ENCODE measurements at regions of chr21 and their contacts with region 1.

Region 1: DNA sequence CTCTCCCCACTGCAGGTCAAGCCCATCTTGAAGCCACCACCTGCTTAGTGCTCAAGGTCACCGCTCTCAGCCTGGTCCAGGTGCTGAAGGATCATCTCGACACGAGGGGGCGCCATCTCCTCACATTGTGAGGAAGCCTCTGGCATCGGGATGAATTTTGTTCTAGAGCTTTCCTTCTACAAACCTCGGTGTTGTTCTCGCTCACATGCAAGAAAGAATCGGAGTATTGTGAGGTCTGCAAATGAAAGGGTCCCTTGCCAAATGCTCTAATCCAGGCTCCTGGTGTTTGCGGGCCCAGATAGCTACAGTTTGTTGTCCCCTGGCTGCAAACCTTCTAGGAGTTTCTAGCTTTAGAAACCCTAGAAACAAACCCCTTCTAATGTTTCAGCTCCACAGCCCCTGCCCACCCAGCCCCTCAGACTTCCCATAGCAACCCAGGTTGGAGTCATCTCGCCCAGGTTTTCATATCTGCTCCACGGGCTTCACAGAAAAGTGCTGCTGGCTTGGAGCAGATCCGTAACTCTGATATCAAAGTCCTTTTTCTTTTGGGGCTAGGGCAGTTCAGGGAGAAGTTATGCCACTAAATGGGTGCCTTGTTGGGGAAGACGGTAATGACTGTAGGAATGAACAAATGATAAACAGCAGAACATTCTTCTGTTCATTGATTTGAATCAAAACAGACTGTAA is 8.6 kb upstream of the ATP5PO start:
- DNase-seq: peak; percentile 83 to 92 (median 84)
- ATAC-seq: peak; percentile 100
- H3K4me3 ChIP-seq: no peak overlapping the region
- H3K27ac ChIP-seq: no peak overlapping the region
- H3K4me1 ChIP-seq: peaks cover 0 to 3% of the 10 kb centered on the region in 2 experiments; a peak in 1 of 5 replicates
- H3K27me3 ChIP-seq: peaks cover 0 to 6% of the 10 kb centered on the region in 2 experiments; a peak in 1 of 5 replicates
- CTCF ChIP-seq: peak; percentile 94 to 98 (median 94)
- EP300 ChIP-seq: peak; percentile 49; the same call in 1 of the 2 replicates
- POLR2A ChIP-seq: no peak
- RAD21 ChIP-seq: peak; percentile 99 to 100

Region 2: DNA sequence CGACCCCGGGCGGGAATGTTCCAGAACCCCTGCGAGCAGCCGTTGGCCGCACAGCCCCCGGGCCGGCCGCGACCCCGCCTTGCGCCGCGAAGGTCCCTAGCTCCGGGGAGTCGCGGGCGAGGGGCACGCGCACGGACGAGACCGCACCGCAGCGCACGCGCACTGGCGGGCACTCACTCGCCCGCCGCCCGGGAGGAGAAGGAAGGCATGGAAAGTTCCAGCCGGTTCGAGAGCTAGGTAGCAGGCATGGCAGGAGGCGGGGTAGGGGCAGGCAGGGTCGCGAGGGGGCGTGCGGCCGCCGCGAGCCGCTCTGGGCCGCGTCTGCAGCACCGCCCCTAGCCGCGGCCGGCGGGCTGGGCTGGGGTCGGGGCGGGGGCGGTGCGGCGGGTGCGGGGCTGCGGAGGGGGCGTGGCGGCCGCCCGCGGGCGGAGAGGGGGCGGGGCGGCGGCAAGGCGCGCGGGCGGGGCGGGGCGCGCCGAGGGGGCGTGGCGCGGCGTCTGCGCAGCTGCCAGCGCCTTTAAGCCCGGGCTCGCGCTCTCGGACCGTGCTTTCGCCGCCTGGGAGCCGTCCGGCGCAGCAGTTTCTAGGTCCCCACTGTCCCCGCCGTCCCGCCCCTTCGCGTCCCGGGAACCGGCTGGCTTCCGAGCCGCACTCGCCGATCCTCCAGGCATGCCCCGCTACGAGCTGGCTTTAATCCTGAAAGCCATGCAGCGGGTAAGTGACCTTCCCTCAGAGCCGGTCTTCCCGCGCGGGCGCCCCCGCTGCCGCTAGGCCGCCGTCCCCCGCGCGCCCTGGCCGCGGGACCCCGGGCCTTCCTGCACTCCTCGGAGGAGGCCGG is 149.0 kb after region 1 on chr21 and contains the starts of genes MRPS6 and SLC5A3:
- CTCF ChIA-PET with region 1: no interaction called
- POLR2A ChIA-PET with region 1: interaction called, 3 read pairs
- in situ Hi-C with region 1: loop called (anchors 10 kb)
- intact Hi-C with region 1: loop called (anchors 5 kb)
- DNase-seq: peak; percentile 91 to 96 (median 94)
- ATAC-seq: peak; percentile 82
- H3K4me3 ChIP-seq: peak within 1 kb of the TSS; percentile 65
- H3K27ac ChIP-seq: peak within 1 kb of the TSS; percentile 87
- H3K4me1 ChIP-seq: peaks cover 9 to 36% of the 10 kb centered on the region in 2 experiments; a peak in 4 of 5 replicates
- H3K27me3 ChIP-seq: peaks cover 0 to 5% of the 10 kb centered on the region in 2 experiments; a peak in 2 of 5 replicates
- CTCF ChIP-seq: peak in 2 of 3 experiments; percentile 41 to 50; a peak in 3 of 6 replicates
- EP300 ChIP-seq: peak; percentile 27
- POLR2A ChIP-seq: peak; percentile 87
- RAD21 ChIP-seq: peak; percentile 44 to 55
- polyA plus RNA-seq, gene MRPS6: 31.5 to 39.3 TPM
- polyA plus RNA-seq, gene SLC5A3: 2.9 to 3.4 TPM

Region 3: GRCh38 chr21:34235514-34235913 is 311.3 kb after region 1 on chr21:
- CTCF ChIA-PET with region 1: interaction called, 6 read pairs
- POLR2A ChIA-PET with region 1: no interaction called
- in situ Hi-C with region 1: loop called (anchors 10 kb)
- intact Hi-C with region 1: loop called (anchors 5 kb)
- DNase-seq: no peak
- ATAC-seq: no peak
- H3K4me3 ChIP-seq: no peak overlapping the region
- H3K27ac ChIP-seq: no peak overlapping the region
- H3K4me1 ChIP-seq: no peaks in the 10 kb centered on the region
- H3K27me3 ChIP-seq: peaks cover 2 to 20% of the 10 kb centered on the region in 2 experiments; a peak in 3 of 5 replicates
- CTCF ChIP-seq: no peak
- EP300 ChIP-seq: no peak
- POLR2A ChIP-seq: no peak
- RAD21 ChIP-seq: no peak

Region 4: GRCh38 chr21:34345091-34345871 is 421.1 kb after region 1 on chr21:
- CTCF ChIA-PET with region 1: interaction called, 36 read pairs
- POLR2A ChIA-PET with region 1: interaction called, 21 read pairs
- in situ Hi-C with region 1: loop called (anchors 5 kb)
- intact Hi-C with region 1: loop called (anchors 1 kb)
- DNase-seq: no peak
- ATAC-seq: no peak
- H3K4me3 ChIP-seq: no peak overlapping the region
- H3K27ac ChIP-seq: no peak overlapping the region
- H3K4me1 ChIP-seq: no peaks in the 10 kb centered on the region
- H3K27me3 ChIP-seq: peaks cover 41 to 44% of the 10 kb centered on the region in 2 experiments
- CTCF ChIP-seq: no peak
- EP300 ChIP-seq: no peak
- POLR2A ChIP-seq: no peak
- RAD21 ChIP-seq: no peak

Region 5: DNA sequence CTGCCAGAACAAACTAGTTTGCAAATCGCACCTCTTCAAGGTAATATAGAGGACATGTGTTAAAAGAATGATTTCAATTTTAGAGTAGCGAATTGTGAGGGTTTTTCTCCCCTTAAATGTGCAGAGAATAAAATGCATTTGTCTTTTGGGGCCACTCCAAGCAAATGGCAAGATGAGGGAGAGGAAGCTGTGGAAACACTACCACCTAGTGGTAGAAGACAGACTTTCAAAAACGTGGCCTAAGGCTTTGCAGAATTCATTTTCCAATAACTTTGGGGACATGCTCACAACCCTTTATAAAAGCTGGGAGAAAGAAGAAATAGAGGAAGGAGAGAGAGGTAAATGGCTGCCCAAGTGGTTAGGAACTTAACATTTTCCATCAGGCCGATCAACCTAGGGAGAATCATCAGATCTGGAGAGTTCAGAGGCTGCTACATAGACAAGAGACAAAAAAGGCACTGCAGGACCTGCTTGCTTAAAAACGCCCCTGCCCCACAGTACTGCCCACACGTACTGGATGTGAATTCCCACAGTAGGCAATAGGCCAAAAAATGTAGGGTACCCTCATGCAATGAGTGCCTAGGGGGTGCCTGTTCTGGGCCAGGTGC is 706.4 kb after region 1 on chr21:
- CTCF ChIA-PET with region 1: interaction called, 3 read pairs
- POLR2A ChIA-PET with region 1: no interaction called
- in situ Hi-C with region 1: loop called (anchors 10 kb)
- intact Hi-C with region 1: no loop called
- DNase-seq: peak; percentile 72 to 78 (median 76)
- ATAC-seq: peak; percentile 88
- H3K4me3 ChIP-seq: no peak overlapping the region
- H3K27ac ChIP-seq: no peak overlapping the region
- H3K4me1 ChIP-seq: no peaks in the 10 kb centered on the region
- H3K27me3 ChIP-seq: peaks cover 16 to 31% of the 10 kb centered on the region in 2 experiments
- CTCF ChIP-seq: peak; percentile 80 to 96 (median 88)
- EP300 ChIP-seq: no peak
- POLR2A ChIP-seq: no peak
- RAD21 ChIP-seq: peak; percentile 96 to 98